CD4-positive, alpha-beta T cell (primary cell): ENCODE measurements at regions of chr12 and their contacts with region 1.

Region 1: DNA sequence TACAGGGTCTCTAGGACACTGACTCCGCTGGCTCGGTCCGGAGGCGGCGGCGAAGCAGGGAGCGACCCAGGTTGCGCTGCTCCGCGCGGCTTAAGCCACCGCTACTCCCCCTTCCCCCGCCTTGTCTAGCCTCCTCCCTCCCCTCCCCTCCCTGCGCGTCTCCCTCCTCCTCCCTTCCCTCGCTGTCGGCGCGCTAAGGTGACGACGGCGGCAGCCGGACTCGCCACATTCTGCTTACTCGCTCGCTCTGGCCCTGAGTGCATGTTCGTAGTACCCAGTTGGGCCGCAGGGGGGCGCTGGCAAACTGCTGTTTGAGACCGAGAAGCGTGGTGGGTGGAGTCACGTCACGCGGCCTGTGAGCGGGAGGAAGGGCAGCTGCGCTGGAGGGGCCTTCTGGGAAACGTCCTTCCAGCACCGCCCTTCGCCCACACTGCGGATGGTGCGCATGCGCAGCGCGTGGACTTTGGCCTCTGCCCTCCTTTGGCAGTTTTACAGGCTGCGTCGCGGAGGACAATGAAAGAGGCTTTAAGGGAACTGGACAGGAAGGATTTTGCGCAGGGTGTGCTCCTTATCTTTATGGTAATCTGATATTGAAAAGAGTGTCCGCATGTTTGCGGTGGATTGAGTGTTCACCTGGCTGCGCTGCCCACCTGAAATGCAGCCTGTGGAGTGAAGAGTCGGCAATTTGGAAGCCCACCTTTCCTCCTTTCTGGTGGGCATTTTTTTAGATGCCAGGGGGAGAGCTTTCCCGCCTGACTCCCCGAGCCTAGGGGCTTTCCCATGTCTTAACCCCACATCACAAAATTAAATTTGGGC is at the start of gene SCAF11:
- DNase-seq: peak; percentile 100
- ATAC-seq: peak; percentile 76
- H3K4me3 ChIP-seq: peak within 1 kb of the TSS; percentile 95
- H3K4me3 Mint-ChIP-seq: peak within 1 kb of the TSS; percentile 95
- H3K27ac ChIP-seq: peak within 1 kb of the TSS; percentile 98
- H3K27ac Mint-ChIP-seq: peak within 1 kb of the TSS; percentile 98
- H3K4me1 ChIP-seq: peaks cover 21% of the 10 kb centered on the region
- H3K4me1 Mint-ChIP-seq: peaks cover 56% of the 10 kb centered on the region
- H3K27me3 ChIP-seq: no peaks in the 10 kb centered on the region
- H3K27me3 Mint-ChIP-seq: peaks cover 4% of the 10 kb centered on the region
- CTCF ChIP-seq: peak; percentile 79
- total RNA-seq, gene SCAF11: 205 to 213 TPM

Region 2: DNA sequence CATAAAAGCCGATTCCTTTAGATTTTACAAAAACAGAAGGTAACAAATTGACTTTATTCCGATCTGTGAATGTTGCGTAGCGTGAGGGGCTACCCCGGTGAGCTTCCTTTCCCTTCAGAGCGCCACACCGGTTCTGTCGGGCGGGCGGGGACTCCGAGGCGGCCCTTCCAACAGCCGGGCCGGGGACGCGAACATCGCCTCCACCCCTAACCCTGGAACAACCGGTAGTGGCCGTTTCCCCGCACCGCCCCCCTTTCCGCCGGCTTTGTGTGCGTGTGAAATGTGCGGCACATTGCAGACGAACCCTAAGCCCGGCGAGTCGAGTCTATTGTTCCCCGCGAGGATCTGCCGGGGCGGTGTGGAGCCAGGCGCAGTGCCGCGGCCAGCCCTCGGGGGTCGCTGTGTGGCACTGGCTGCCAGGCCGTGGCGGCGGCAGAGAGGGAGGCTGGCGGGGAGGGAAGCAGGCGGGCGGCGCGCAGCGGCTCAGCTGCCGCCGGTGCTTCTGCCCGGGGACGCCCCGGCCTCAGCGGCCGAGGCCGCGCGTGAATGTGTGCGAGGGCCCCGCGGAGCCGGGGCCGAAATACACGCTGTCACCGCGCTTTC is 261.9 kb before region 1 on chr12:
- CTCF ChIA-PET with region 1: no interaction called
- POLR2A ChIA-PET with region 1: interaction called, 73 read pairs
- intact Hi-C with region 1: loop called (anchors 1 to 5 kb)
- DNase-seq: peak; percentile 94 to 99 (median 96)
- ATAC-seq: peak; percentile 71
- H3K4me3 ChIP-seq: peak overlapping the region; percentile 77
- H3K4me3 Mint-ChIP-seq: peak overlapping the region; percentile 100
- H3K27ac ChIP-seq: peak overlapping the region; percentile 98 to 99
- H3K27ac Mint-ChIP-seq: peak overlapping the region; percentile 84
- H3K4me1 ChIP-seq: peaks cover 8% of the 10 kb centered on the region
- H3K4me1 Mint-ChIP-seq: peaks cover 37% of the 10 kb centered on the region
- H3K27me3 ChIP-seq: no peaks in the 10 kb centered on the region
- H3K27me3 Mint-ChIP-seq: no peaks in the 10 kb centered on the region
- CTCF ChIP-seq: peak; percentile 89

Region 3: GRCh38 chr12:45859915-45860314 is 130.8 kb before region 1 on chr12:
- CTCF ChIA-PET with region 1: no interaction called
- POLR2A ChIA-PET with region 1: no interaction called
- intact Hi-C with region 1: no loop called
- DNase-seq: no peak
- ATAC-seq: no peak
- H3K4me3 ChIP-seq: no peak overlapping the region
- H3K4me3 Mint-ChIP-seq: no peak overlapping the region
- H3K27ac ChIP-seq: no peak overlapping the region
- H3K27ac Mint-ChIP-seq: no peak overlapping the region
- H3K4me1 ChIP-seq: no peaks in the 10 kb centered on the region
- H3K4me1 Mint-ChIP-seq: peaks cover 8% of the 10 kb centered on the region
- H3K27me3 ChIP-seq: no peaks in the 10 kb centered on the region
- H3K27me3 Mint-ChIP-seq: no peaks in the 10 kb centered on the region
- CTCF ChIP-seq: no peak

Region 4: GRCh38 chr12:46071769-46072624 is 81.3 kb after region 1 on chr12:
- CTCF ChIA-PET with region 1: interaction called, 7 read pairs
- POLR2A ChIA-PET with region 1: interaction called, 4 read pairs
- intact Hi-C with region 1: loop called in 1 of 2 experiments (anchors 5 kb)
- DNase-seq: peak; percentile 32 to 77 (median 52)
- ATAC-seq: peak; percentile 96
- H3K4me3 ChIP-seq: no peak overlapping the region
- H3K4me3 Mint-ChIP-seq: no peak overlapping the region
- H3K27ac ChIP-seq: no peak overlapping the region
- H3K27ac Mint-ChIP-seq: no peak overlapping the region
- H3K4me1 ChIP-seq: no peaks in the 10 kb centered on the region
- H3K4me1 Mint-ChIP-seq: peaks cover 4% of the 10 kb centered on the region
- H3K27me3 ChIP-seq: no peaks in the 10 kb centered on the region
- H3K27me3 Mint-ChIP-seq: peaks cover 4% of the 10 kb centered on the region
- CTCF ChIP-seq: peak; percentile 88

Region 5: GRCh38 chr12:46217541-46218321 is 227.1 kb after region 1 on chr12:
- CTCF ChIA-PET with region 1: interaction called, 5 read pairs
- POLR2A ChIA-PET with region 1: interaction called, 15 read pairs
- intact Hi-C with region 1: loop called in 1 of 2 experiments (anchors 2 kb)
- DNase-seq: peak in 10 of 14 experiments; percentile 22 to 90 (median 56)
- ATAC-seq: peak; percentile 33
- H3K4me3 ChIP-seq: peak overlapping the region; percentile 40
- H3K4me3 Mint-ChIP-seq: peak overlapping the region; percentile 85
- H3K27ac ChIP-seq: peak overlapping the region; percentile 91 to 94
- H3K27ac Mint-ChIP-seq: peak overlapping the region; percentile 96
- H3K4me1 ChIP-seq: peaks cover 78% of the 10 kb centered on the region
- H3K4me1 Mint-ChIP-seq: peaks cover 98% of the 10 kb centered on the region
- H3K27me3 ChIP-seq: no peaks in the 10 kb centered on the region
- H3K27me3 Mint-ChIP-seq: no peaks in the 10 kb centered on the region
- CTCF ChIP-seq: no peak

Region 6: DNA sequence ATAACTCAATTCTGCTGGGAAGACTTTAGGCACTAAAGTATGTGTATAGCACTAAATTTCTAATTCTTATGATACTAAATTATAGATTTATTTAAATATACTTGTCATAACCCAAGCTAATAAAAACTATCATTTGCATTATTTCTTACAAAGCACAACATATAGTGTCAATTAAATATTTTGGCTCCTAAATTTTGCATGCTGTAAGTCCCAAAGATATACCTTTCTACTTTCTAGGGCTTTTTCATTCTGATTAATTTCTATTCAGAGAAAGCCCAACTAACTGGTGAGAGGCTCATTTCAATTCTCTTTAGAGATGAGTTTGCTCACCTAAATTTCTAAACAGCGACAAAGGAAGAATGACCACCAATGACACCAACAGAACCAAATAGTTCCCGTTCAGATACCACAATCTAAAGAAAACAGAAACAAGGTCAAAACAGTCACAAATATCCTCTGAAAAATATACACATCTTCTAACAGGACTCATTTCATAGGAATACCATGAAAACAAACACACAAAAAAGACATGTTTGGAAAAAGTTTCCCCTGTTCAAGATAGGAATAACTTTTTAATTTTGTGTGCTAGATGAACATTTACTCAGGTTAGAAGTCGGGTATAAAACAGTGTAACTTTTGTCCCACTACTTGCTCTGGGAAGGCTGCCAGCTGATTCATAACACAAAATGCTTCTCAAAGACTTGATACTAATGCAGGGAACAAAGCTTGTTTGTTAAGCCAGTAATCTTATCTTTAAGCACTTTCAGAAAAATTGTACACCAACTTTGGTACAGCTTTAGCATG is 374.3 kb after region 1 on chr12:
- CTCF ChIA-PET with region 1: no interaction called
- POLR2A ChIA-PET with region 1: interaction called, 4 read pairs
- intact Hi-C with region 1: loop called in 1 of 2 experiments (anchors 10 kb)
- DNase-seq: no peak
- ATAC-seq: no peak
- H3K4me3 ChIP-seq: no peak overlapping the region
- H3K4me3 Mint-ChIP-seq: peak overlapping the region; percentile 30
- H3K27ac ChIP-seq: no peak overlapping the region
- H3K27ac Mint-ChIP-seq: peak overlapping the region; percentile 64
- H3K4me1 ChIP-seq: peaks cover 16% of the 10 kb centered on the region
- H3K4me1 Mint-ChIP-seq: peaks cover 89% of the 10 kb centered on the region
- H3K27me3 ChIP-seq: no peaks in the 10 kb centered on the region
- H3K27me3 Mint-ChIP-seq: no peaks in the 10 kb centered on the region
- CTCF ChIP-seq: no peak

Region 7: GRCh38 chr12:47698055-47698454 is 1707.4 kb after region 1 on chr12:
- CTCF ChIA-PET with region 1: no interaction called
- POLR2A ChIA-PET with region 1: no interaction called
- intact Hi-C with region 1: loop called in 1 of 2 experiments (anchors 10 kb)
- DNase-seq: no peak
- ATAC-seq: no peak
- H3K4me3 ChIP-seq: no peak overlapping the region
- H3K4me3 Mint-ChIP-seq: no peak overlapping the region
- H3K27ac ChIP-seq: no peak overlapping the region
- H3K27ac Mint-ChIP-seq: no peak overlapping the region
- H3K4me1 ChIP-seq: no peaks in the 10 kb centered on the region
- H3K4me1 Mint-ChIP-seq: peaks cover 27% of the 10 kb centered on the region
- H3K27me3 ChIP-seq: no peaks in the 10 kb centered on the region
- H3K27me3 Mint-ChIP-seq: no peaks in the 10 kb centered on the region
- CTCF ChIP-seq: no peak